MCF 10A (cell line): ENCODE measurements at regions of chr11 and their contacts with region 1.

Region 1: GRCh38 chr11:9137293-9138132 is 46.1 kb upstream of the SCUBE2 start:
- DNase-seq: peak; percentile 77
- H3K4me3 Mint-ChIP-seq: no peak overlapping the region
- H3K27ac Mint-ChIP-seq: peak overlapping the region; percentile 2
- H3K4me1 Mint-ChIP-seq: peaks cover 34% of the 10 kb centered on the region
- H3K27me3 Mint-ChIP-seq: no peaks in the 10 kb centered on the region
- CTCF ChIP-seq: peak; percentile 95

Region 2: DNA sequence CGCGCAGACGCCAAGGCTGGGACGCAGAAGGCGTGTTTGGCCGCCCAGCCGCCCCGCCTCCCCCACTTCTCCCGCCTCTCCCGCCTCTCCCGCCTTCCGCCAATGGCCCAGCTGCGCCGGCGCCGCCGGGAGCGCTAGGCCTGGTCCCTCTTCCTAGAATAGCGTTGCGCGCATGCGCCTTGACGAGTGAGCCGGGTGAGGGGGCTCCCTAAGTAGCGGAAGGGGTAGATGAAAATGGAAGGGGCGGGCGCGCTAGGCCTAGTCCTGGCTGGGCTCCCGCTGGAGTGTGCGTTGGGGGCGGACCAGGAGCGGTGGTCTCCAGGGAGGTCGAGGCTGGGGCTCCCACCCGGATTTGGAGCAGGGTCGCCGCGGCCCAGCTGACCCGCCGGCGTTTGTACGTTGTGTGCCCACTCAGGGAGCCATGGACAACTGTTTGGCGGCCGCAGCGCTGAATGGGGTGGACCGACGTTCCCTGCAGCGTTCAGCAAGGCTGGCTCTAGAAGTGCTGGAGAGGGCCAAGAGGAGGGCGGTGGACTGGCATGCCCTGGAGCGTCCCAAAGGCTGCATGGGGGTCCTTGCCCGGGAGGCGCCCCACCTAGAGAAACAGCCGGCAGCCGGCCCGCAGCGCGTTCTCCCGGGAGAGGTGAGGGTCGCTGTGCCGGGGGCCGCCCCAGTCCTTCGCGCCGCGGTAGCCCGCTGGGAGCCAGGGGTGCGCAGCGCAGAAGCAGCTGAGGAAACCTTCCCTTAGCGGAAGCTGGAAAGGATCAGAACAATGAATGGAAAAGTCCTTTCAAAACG is 226.3 kb before region 1 on chr11 and contains the start of gene AKIP1:
- CTCF ChIA-PET with region 1: interaction called, 17 read pairs
- POLR2A ChIA-PET with region 1: interaction called, 4 read pairs
- intact Hi-C with region 1: loop called (anchors 2 kb)
- DNase-seq: peak; percentile 94
- H3K4me3 Mint-ChIP-seq: peak within 1 kb of the TSS; percentile 84
- H3K27ac Mint-ChIP-seq: peak within 1 kb of the TSS; percentile 33
- H3K4me1 Mint-ChIP-seq: peaks cover 34% of the 10 kb centered on the region
- H3K27me3 Mint-ChIP-seq: no peaks in the 10 kb centered on the region
- CTCF ChIP-seq: no peak
- total RNA-seq, gene AKIP1: 64.6 and 67.6 TPM in 2 replicates

Region 3: GRCh38 chr11:9025101-9025850 is 112.2 kb before region 1 on chr11:
- CTCF ChIA-PET with region 1: interaction called, 19 read pairs
- POLR2A ChIA-PET with region 1: no interaction called
- intact Hi-C with region 1: no loop called
- DNase-seq: no peak
- H3K4me3 Mint-ChIP-seq: no peak overlapping the region
- H3K27ac Mint-ChIP-seq: no peak overlapping the region
- H3K4me1 Mint-ChIP-seq: no peaks in the 10 kb centered on the region
- H3K27me3 Mint-ChIP-seq: peaks cover 17% of the 10 kb centered on the region
- CTCF ChIP-seq: no peak

Region 4: GRCh38 chr11:9092853-9093778 is 44.4 kb before region 1 on chr11:
- CTCF ChIA-PET with region 1: interaction called, 13 read pairs
- POLR2A ChIA-PET with region 1: no interaction called
- intact Hi-C with region 1: no loop called
- DNase-seq: peak; percentile 6
- H3K4me3 Mint-ChIP-seq: no peak overlapping the region
- H3K27ac Mint-ChIP-seq: peak overlapping the region; percentile 31
- H3K4me1 Mint-ChIP-seq: no peaks in the 10 kb centered on the region
- H3K27me3 Mint-ChIP-seq: peaks cover 15% of the 10 kb centered on the region
- CTCF ChIP-seq: peak; percentile 26

Region 5: GRCh38 chr11:9120664-9121485 is 16.6 kb before region 1 on chr11:
- CTCF ChIA-PET with region 1: interaction called, 14 read pairs
- POLR2A ChIA-PET with region 1: no interaction called
- intact Hi-C with region 1: no loop called
- DNase-seq: no peak
- H3K4me3 Mint-ChIP-seq: no peak overlapping the region
- H3K27ac Mint-ChIP-seq: no peak overlapping the region
- H3K4me1 Mint-ChIP-seq: no peaks in the 10 kb centered on the region
- H3K27me3 Mint-ChIP-seq: no peaks in the 10 kb centered on the region
- CTCF ChIP-seq: no peak

Region 6: DNA sequence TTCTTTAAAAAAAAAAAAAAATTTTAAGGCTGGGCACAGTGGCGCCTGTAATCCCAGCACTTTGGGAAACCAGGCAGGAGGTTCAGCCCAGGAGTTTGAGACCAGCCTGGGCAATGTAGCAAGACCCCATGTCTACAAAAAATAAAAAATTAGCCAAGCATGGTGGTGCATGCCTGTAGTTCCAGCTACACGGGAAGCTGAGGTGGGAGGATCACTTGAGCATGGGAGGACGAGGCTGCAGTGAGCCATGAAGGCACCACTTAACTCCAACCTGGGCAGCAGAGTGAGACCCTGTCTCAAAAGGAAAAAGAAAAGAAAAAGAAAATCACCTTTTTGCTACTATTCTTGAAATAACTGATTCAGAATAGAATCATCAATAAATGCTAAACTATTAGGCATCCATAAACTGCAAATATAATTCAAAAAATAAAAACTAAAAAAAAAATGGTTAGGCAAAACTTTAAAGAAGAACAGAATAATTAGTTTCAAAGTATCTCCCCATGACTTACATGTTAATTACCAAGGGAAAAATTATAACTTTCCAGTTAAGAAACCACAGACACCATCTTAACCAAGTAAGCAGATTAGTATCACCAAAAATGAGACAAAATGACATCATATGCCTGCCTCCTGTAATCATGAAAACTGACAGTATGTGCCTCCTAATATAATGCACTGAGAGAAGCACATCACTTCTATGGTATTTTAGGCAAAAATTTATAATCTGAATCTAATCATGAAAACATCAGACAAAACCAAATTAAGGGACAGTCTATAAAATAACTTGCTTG is 64.1 kb after region 1 on chr11:
- CTCF ChIA-PET with region 1: no interaction called
- POLR2A ChIA-PET with region 1: no interaction called
- intact Hi-C with region 1: no loop called
- DNase-seq: no peak
- H3K4me3 Mint-ChIP-seq: no peak overlapping the region
- H3K27ac Mint-ChIP-seq: no peak overlapping the region
- H3K4me1 Mint-ChIP-seq: no peaks in the 10 kb centered on the region
- H3K27me3 Mint-ChIP-seq: no peaks in the 10 kb centered on the region
- CTCF ChIP-seq: no peak

Region 7: DNA sequence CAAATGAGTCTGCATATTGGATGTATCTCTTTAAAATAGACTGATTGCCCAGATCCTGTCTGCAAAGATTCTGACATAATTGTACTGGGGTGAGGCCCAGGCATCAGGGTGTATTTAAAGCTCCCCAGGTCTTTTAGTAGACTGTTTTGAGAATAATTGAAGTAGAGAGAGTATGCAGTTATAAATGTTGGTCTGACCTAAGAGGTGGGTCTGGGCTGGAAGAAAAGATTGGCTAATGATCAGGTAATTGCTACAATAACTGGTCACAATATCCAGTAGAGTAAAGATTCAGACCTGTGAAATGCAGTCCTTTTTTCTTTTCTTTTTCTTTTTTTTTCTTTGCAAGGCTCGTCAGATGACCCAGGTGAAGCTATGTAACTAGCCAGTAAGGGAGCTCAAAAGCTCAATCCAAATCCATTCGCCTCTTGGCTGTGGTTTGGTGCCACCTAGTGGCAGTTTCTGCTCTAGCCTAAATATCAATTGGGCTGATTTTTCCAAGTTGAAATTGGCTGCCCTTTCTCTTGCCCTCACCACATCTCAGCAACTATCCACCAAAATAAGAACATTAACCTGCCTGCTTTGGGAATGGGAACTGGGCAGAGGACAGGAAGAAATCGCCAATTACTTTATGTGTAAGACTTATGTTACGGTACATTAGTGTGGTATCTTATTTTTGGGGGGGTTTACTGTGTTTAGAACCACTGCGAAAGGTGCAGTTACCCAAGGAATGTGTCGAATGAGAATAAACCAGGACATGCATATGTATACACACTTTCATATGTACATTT is 369.2 kb after region 1 on chr11:
- CTCF ChIA-PET with region 1: no interaction called
- POLR2A ChIA-PET with region 1: no interaction called
- intact Hi-C with region 1: no loop called
- DNase-seq: peak; percentile 82
- H3K4me3 Mint-ChIP-seq: no peak overlapping the region
- H3K27ac Mint-ChIP-seq: peak overlapping the region; percentile 16
- H3K4me1 Mint-ChIP-seq: peaks cover 17% of the 10 kb centered on the region
- H3K27me3 Mint-ChIP-seq: no peaks in the 10 kb centered on the region
- CTCF ChIP-seq: peak; percentile 74

Region 8: DNA sequence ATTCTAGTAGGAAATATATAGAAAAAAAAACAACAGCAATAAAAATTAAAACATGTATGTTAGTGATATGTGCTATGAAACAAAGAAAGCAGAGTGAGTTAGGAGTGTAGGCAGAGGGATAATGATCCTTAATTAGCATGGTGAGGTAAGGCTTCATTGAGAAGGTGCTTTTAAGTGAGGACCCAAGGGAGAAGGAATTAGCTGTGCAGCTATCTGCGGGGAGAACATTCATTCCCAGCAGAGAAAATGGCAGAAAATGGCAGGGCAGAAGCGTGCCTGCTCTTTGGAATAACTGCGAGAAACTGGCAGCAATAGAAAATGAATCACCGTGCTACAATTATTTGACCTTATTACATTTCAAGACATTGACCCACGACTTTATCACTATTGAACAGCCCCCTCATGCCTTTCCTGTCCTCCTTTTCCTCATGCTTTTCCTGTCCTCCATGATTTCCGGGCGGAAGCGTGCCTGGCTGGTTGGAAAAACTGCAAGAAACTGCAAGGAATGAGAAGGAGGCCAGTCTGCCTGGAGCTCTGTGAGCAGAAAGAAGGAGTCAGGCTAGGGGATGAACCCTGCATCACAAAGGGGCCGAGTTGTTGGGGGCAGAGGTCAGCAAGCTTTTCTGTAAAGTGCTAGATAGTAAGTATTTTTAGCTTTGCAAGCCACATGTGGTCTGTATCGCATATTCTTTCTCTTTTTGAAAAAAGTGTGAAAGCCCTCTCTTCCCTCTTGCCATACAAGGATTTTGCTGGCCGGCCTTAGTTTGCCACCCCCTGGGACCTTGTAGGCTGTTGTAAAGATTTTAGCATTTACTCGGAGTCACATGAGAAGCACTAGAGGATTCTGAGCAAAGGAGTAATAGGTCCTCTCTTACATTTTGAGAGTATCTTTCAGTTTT is 489.2 kb after region 1 on chr11:
- CTCF ChIA-PET with region 1: no interaction called
- POLR2A ChIA-PET with region 1: no interaction called
- intact Hi-C with region 1: no loop called
- DNase-seq: no peak
- H3K4me3 Mint-ChIP-seq: no peak overlapping the region
- H3K27ac Mint-ChIP-seq: no peak overlapping the region
- H3K4me1 Mint-ChIP-seq: peaks cover 7% of the 10 kb centered on the region
- H3K27me3 Mint-ChIP-seq: no peaks in the 10 kb centered on the region
- CTCF ChIP-seq: no peak